HEK293 (cell line): ENCODE measurements at regions of chr11 and their contacts with region 1.

Region 1: GRCh38 chr11:75562048-75562835 is at the start of gene SERPINH1:
- H3K4me3 ChIP-seq: peak within 1 kb of the TSS; percentile 82
- H3K27ac ChIP-seq: peak within 1 kb of the TSS; percentile 83
- H3K4me1 ChIP-seq: no peaks in the 10 kb centered on the region
- CTCF ChIP-seq: no peak

Region 2: DNA sequence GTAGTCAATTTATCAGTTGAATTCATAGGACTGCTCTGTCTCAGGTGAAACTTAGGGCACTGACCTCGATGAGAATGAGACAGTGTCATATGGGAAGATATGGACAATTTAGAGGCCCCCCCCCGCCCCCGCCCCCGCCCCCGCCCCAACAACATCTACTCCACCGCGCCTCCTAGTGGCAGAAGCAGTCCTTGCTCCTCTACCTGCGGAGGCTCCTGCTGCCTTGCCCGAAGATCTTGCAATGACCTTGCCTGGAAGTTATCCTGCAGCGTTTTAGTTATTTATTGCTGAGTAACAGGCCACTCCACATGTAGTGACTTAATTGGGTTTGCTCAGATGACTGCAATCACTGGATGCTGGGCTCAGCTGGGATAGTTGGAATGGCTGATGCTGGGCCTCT is 15.0 kb after region 1 on chr11:
- CTCF ChIA-PET with region 1: interaction called, 16 read pairs
- POLR2A ChIA-PET with region 1: interaction called, 23 read pairs
- H3K4me3 ChIP-seq: no peak overlapping the region
- H3K27ac ChIP-seq: no peak overlapping the region
- H3K4me1 ChIP-seq: no peaks in the 10 kb centered on the region
- CTCF ChIP-seq: no peak

Region 3: DNA sequence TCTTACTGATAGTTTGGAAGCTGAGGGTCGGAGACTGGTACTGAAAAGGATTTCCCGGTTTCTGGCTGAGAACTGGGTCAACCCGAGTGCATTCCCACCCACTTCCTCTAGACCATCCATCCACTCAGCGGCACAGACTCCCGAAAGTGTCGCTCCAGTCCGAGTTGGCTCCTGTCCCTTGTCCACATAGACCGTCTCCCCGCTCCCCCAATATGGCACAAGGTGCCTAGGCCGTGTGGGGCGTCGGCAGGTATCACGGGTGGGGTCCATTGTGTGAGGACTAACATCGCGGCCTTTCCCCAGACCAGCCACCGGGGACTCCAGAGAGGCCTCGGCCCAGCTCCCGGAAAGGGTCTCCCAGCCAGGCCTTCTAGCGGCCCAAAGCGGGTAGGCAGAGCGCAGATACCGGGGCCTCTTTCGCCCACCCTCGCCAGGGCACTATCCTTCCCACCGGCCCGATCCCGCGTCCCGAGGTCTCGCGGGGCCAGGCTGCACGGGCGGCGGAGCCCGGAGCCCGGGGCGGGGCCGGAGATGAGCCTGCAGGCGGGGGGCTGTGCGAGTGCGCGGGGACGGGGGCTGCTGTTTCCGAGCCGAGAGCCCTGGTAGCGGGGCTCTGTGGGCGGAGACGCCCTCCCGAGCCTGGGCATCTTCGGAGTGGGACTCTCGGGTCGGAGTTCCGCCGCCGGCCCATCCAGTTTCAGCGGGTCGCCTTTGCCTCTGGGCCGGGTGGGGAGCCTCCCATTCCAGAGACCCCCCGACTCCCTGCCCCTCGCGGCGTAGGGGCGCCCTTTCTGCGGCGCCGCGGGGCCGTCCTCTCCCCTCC is 20.9 kb after region 1 on chr11:
- CTCF ChIA-PET with region 1: interaction called, 7 read pairs
- POLR2A ChIA-PET with region 1: interaction called, 11 read pairs
- H3K4me3 ChIP-seq: peak overlapping the region; percentile 50
- H3K27ac ChIP-seq: peak overlapping the region; percentile 78
- H3K4me1 ChIP-seq: no peaks in the 10 kb centered on the region
- CTCF ChIP-seq: peak; percentile 53; the same call in 1 of the 2 replicates

Region 4: GRCh38 chr11:75603791-75604736 is 41.8 kb after region 1 on chr11:
- CTCF ChIA-PET with region 1: no interaction called
- POLR2A ChIA-PET with region 1: no interaction called
- H3K4me3 ChIP-seq: no peak overlapping the region
- H3K27ac ChIP-seq: no peak overlapping the region
- H3K4me1 ChIP-seq: no peaks in the 10 kb centered on the region
- CTCF ChIP-seq: no peak